AG04450 (cell line): ENCODE measurements at regions of chr1 and their contacts with region 1.

Region 1: GRCh38 chr1:234499119-234499942 is 20.4 kb upstream of the TARBP1 start:
- DNase-seq: peak; percentile 69
- H3K4me3 ChIP-seq: peak overlapping the region; percentile 39
- H3K27ac ChIP-seq: peak overlapping the region; percentile 93
- H3K27me3 ChIP-seq: no peaks in the 10 kb centered on the region
- CTCF ChIP-seq: peak; percentile 94

Region 2: GRCh38 chr1:233197940-233198339 is 1301.4 kb before region 1 on chr1:
- CTCF ChIA-PET with region 1: no interaction called
- POLR2A ChIA-PET with region 1: no interaction called
- DNase-seq: no peak
- H3K4me3 ChIP-seq: no peak overlapping the region
- H3K27ac ChIP-seq: no peak overlapping the region
- H3K27me3 ChIP-seq: no peaks in the 10 kb centered on the region
- CTCF ChIP-seq: no peak

Region 3: DNA sequence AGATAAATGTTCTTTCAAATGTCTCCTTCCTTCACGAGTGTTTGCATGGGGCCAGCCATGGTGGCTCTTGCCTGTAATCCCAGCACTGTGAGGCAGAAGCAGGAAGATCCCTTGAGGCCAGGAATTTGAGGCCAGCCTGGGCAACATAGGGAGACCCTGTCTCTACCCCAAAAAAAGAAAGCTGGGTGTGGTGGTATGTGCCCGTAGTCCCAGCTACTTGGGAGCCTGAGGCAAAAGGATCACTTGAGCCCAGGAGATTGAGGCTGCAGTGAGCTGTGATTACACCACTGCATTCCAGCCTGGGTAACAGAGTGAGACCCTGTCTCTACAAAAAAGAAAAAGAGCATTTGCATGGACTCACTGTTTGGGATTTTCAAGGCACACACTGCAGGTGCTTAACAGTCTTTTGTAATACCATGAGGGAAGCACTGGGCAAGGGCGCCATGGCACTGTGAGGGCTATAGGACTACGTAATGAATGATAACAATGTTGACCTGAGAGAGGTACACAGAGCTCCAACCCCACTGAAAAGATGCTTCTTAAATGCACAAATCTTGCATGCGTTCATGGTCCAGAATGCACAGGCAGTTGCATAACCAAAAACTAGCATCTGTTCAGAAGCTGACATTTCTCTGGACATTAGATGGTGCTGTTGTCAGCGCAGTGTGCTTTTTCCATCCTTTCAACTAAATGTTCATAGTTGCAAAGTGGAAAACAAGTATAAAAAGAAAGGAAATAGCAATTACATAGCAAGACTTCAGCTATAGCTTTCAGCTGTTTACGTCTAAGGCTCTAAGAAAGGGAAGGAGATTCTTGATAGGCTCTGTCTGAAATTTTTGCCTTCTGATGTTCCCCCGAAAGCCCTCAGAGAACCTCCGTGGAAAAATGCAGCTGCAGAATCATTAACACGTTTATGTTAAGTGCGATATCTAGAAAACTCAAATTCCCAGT is 12.6 kb before region 1 on chr1:
- CTCF ChIA-PET with region 1: interaction called, 21 read pairs
- POLR2A ChIA-PET with region 1: interaction called, 4 read pairs
- DNase-seq: peak; percentile 77
- H3K4me3 ChIP-seq: no peak overlapping the region
- H3K27ac ChIP-seq: peak overlapping the region; percentile 41
- H3K27me3 ChIP-seq: peaks cover 2% of the 10 kb centered on the region
- CTCF ChIP-seq: peak; percentile 81

Region 4: DNA sequence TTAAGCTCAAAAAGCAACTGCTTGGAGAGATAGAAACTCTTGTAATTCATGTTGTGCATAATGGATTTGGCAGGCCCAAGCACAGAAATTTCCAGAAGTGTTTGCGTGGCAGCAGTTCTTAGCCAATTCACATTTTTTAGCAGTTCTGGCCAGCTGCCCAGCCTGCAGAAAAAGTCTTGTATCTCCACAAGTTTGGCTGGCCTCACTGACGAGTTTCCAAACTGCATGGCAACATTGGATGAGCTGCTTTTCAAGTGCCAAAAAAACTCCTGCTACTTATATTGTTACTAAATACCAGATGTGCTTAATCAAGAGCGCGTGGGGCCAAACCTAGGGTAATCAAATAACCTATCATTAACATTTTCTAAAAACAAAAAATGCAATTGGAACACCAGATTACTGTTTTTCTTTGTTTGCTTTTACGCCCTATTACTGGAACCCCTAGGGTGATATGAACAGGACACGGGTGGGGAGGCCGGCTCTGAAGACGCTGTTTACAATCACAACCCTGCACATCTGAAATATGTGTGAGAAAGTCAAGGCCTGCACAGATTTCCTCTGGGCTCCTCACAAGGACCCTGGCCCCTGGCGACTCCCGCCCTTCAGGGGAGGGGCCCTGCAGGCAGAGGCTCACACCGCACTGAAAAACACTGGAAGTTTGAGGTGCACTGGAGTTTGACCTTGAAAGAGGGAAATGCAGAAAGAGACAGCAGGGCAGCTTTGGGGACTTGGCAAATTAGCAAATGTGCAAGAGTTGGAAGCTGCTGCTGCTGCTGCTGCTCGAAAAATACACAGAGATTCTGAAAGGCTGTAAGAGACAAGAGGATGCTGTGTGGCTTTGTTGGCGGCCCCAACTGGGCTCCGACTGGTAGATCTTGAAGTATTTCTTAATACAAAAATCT is 34.9 kb after region 1 on chr1:
- CTCF ChIA-PET with region 1: interaction called, 12 read pairs
- POLR2A ChIA-PET with region 1: interaction called, 3 read pairs
- DNase-seq: peak; percentile 97
- H3K4me3 ChIP-seq: no peak overlapping the region
- H3K27ac ChIP-seq: peak overlapping the region; percentile 98
- H3K27me3 ChIP-seq: no peaks in the 10 kb centered on the region
- CTCF ChIP-seq: no peak

Region 5: DNA sequence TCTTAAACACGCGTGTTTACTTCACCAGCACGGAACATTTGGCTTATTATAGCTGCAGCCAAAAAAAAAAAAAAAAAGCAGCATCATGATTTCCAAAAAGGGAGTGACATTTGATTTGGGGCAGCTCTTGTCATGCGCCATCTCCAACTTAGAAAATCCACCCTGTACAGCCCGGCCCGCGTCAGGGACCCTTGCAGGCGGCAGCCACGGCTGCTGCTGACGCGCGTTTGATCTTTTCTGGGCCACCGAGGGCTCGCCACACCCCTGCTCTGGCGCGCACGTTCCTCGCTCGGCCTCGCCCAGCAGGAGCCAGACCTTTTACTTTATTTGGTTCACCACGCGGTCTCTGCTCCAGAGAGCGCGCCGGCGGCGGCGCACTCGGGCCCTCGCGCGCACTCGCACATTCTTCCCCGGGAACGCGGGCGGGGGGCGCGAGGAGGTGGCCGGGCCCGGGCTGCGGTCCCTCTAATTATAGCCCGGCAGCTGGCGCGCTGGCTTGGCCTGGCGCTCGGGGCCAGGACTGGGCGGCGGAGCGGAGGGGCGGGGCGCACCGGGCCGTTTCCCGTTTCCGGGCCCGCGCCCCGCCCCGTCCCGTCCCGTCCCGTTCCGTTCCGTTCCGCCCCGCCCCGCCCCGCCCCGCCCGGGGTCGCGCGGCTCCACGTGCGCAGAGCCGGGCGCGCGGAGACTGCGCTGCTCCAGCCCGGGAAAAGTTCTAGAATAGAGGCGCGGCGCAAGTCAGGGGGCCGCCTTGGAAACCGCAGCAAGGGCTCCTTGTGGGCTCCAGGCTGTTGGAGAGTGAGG is 100.5 kb after region 1 on chr1:
- CTCF ChIA-PET with region 1: interaction called, 27 read pairs
- POLR2A ChIA-PET with region 1: interaction called, 7 read pairs
- DNase-seq: no peak
- H3K4me3 ChIP-seq: peak overlapping the region; percentile 64
- H3K27ac ChIP-seq: peak overlapping the region; percentile 96
- H3K27me3 ChIP-seq: no peaks in the 10 kb centered on the region
- CTCF ChIP-seq: no peak

Region 6: DNA sequence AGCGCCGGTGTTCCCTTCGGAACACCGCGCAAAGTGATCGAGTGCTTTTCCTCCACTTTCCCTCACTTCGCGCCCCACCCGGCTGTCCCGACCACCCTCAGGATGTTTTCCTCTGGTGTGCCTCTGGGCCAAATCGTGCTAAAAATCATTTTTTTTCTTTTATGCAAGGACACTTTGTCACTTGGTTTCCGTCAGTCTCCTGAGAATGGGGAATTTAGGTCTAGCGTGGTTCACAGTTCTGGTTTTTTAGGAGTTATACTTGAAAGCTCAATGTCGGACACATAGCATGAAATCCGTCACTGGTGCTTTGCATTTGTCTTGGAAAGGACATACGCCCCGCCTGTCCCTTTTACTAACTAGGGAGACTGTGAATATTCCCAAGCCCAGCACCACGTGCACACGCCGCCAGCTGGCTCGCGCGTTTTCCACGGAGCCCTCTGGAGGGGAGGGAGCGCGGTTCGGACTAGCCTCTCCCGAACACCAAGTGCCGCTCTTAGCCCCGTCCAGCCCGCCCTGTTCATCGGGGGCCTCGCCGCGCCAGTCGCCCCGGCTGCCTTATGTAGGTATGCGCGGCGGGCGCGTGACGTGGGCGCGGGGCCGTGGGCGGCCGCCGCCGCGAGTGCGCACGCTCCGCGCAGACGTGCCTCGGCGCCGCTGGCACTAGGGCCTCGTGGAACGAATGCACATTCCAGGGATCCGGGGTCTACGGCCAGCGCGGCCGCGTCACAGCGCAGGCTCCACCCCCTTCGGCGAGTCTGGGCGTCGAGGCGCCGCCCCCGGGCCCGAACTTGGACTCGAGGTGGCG is 111.2 kb after region 1 on chr1:
- CTCF ChIA-PET with region 1: interaction called, 27 read pairs
- POLR2A ChIA-PET with region 1: interaction called, 14 read pairs
- DNase-seq: peak; percentile 89
- H3K4me3 ChIP-seq: peak overlapping the region; percentile 68
- H3K27ac ChIP-seq: peak overlapping the region; percentile 96
- H3K27me3 ChIP-seq: no peaks in the 10 kb centered on the region
- CTCF ChIP-seq: peak; percentile 16; the same call in 1 of the 2 replicates

Region 7: GRCh38 chr1:235077571-235078479 is 578.5 kb after region 1 on chr1:
- CTCF ChIA-PET with region 1: interaction called, 42 read pairs
- POLR2A ChIA-PET with region 1: interaction called, 6 read pairs
- DNase-seq: no peak
- H3K4me3 ChIP-seq: no peak overlapping the region
- H3K27ac ChIP-seq: peak overlapping the region; percentile 47
- H3K27me3 ChIP-seq: no peaks in the 10 kb centered on the region
- CTCF ChIP-seq: no peak

Region 8: GRCh38 chr1:235093696-235094592 is 594.6 kb after region 1 on chr1:
- CTCF ChIA-PET with region 1: interaction called, 19 read pairs
- POLR2A ChIA-PET with region 1: interaction called, 3 read pairs
- DNase-seq: no peak
- H3K4me3 ChIP-seq: no peak overlapping the region
- H3K27ac ChIP-seq: no peak overlapping the region
- H3K27me3 ChIP-seq: no peaks in the 10 kb centered on the region
- CTCF ChIP-seq: peak; percentile 94